MCF 10A (cell line): ENCODE measurements at regions of chr1 and their contacts with region 1.

Region 1: GRCh38 chr1:224644553-224645154 is 28.5 kb downstream of the CNIH3 start:
- DNase-seq: peak; percentile 83
- H3K4me3 Mint-ChIP-seq: no peak overlapping the region
- H3K27ac Mint-ChIP-seq: no peak overlapping the region
- H3K4me1 Mint-ChIP-seq: no peaks in the 10 kb centered on the region
- H3K27me3 Mint-ChIP-seq: peaks cover 21% of the 10 kb centered on the region
- CTCF ChIP-seq: peak; percentile 97

Region 2: DNA sequence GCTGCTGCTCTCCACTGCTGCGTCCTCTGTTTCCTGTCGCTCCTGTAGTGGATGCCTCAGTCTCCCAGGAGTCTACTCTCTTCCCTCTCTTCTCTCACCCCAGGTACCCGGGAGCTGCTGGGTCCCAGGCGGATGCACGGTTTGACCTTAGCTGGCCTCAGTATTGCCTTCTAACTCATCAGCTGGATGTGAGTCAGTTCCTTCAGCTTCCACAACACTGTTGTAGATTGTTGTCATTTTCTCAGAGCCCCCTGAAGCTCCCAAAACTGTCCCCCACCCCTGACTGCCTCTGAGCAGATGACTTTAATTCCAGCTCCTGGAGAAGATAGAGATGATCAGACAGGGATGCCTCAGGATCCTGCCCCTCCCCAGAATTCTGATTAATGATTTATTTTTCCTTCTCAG is 21.3 kb before region 1 on chr1:
- CTCF ChIA-PET with region 1: interaction called, 11 read pairs
- POLR2A ChIA-PET with region 1: no interaction called
- intact Hi-C with region 1: no loop called
- DNase-seq: no peak
- H3K4me3 Mint-ChIP-seq: no peak overlapping the region
- H3K27ac Mint-ChIP-seq: no peak overlapping the region
- H3K4me1 Mint-ChIP-seq: peaks cover 16% of the 10 kb centered on the region
- H3K27me3 Mint-ChIP-seq: peaks cover 16% of the 10 kb centered on the region
- CTCF ChIP-seq: no peak

Region 3: DNA sequence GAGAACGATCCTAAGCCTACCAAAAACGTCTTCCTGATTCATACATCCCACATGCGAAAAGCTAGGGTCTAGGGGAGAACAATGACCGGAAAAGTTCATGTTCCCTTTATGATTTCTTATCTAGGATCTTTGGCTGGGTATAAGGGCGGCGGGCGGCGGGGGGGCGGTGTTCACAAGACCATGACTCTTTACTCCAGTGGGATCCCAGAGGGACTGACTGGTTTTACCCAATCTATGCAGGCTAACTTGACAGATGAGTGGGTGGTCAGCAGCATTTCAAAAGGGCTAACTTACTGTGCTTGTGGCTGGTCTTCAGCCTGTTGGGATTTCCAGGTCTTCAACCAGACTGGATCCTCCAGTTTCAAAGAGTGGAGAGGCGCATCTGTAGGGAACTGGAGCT is 11.7 kb after region 1 on chr1:
- CTCF ChIA-PET with region 1: interaction called, 158 read pairs
- POLR2A ChIA-PET with region 1: no interaction called
- intact Hi-C with region 1: no loop called
- DNase-seq: no peak
- H3K4me3 Mint-ChIP-seq: no peak overlapping the region
- H3K27ac Mint-ChIP-seq: no peak overlapping the region
- H3K4me1 Mint-ChIP-seq: peaks cover 12% of the 10 kb centered on the region
- H3K27me3 Mint-ChIP-seq: no peaks in the 10 kb centered on the region
- CTCF ChIP-seq: no peak

Region 4: GRCh38 chr1:224700915-224701531 is 56.4 kb after region 1 on chr1:
- CTCF ChIA-PET with region 1: interaction called, 10 read pairs
- POLR2A ChIA-PET with region 1: no interaction called
- intact Hi-C with region 1: no loop called
- DNase-seq: peak; percentile 58
- H3K4me3 Mint-ChIP-seq: no peak overlapping the region
- H3K27ac Mint-ChIP-seq: no peak overlapping the region
- H3K4me1 Mint-ChIP-seq: no peaks in the 10 kb centered on the region
- H3K27me3 Mint-ChIP-seq: no peaks in the 10 kb centered on the region
- CTCF ChIP-seq: peak; percentile 39

Region 5: GRCh38 chr1:224736619-224737352 is 92.1 kb after region 1 on chr1:
- CTCF ChIA-PET with region 1: interaction called, 10 read pairs
- POLR2A ChIA-PET with region 1: no interaction called
- intact Hi-C with region 1: no loop called
- DNase-seq: peak; percentile 22
- H3K4me3 Mint-ChIP-seq: no peak overlapping the region
- H3K27ac Mint-ChIP-seq: no peak overlapping the region
- H3K4me1 Mint-ChIP-seq: peaks cover 25% of the 10 kb centered on the region
- H3K27me3 Mint-ChIP-seq: no peaks in the 10 kb centered on the region
- CTCF ChIP-seq: no peak

Region 6: DNA sequence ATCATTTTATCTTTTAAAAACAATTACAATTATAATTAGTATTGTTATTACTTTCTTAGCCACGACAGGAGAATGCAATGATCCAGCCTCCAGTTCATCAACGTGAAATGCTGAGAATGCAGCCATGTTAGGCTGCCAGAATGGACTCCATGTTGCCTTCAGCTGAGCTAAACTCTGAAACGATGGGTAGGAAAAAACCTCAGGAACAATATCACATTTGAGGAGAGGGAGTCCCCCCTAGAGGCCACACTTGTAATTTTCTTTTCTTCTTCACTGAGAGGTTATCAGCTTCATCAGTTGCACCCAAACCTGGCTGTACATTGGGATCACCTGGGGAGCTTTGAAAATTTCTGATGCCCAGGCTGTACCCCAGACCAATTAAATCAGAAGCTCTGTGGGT is 250.3 kb after region 1 on chr1:
- CTCF ChIA-PET with region 1: interaction called, 29 read pairs
- POLR2A ChIA-PET with region 1: no interaction called
- intact Hi-C with region 1: no loop called
- DNase-seq: peak; percentile 62
- H3K4me3 Mint-ChIP-seq: no peak overlapping the region
- H3K27ac Mint-ChIP-seq: no peak overlapping the region
- H3K4me1 Mint-ChIP-seq: no peaks in the 10 kb centered on the region
- H3K27me3 Mint-ChIP-seq: peaks cover 9% of the 10 kb centered on the region
- CTCF ChIP-seq: peak; percentile 47

Region 7: GRCh38 chr1:225242623-225243022 is 598.0 kb after region 1 on chr1:
- CTCF ChIA-PET with region 1: no interaction called
- POLR2A ChIA-PET with region 1: no interaction called
- intact Hi-C with region 1: no loop called
- DNase-seq: no peak
- H3K4me3 Mint-ChIP-seq: no peak overlapping the region
- H3K27ac Mint-ChIP-seq: no peak overlapping the region
- H3K4me1 Mint-ChIP-seq: no peaks in the 10 kb centered on the region
- H3K27me3 Mint-ChIP-seq: no peaks in the 10 kb centered on the region
- CTCF ChIP-seq: no peak